ENCODE measurements at regions of chr12 and their contacts with region 1.

Region 1: DNA sequence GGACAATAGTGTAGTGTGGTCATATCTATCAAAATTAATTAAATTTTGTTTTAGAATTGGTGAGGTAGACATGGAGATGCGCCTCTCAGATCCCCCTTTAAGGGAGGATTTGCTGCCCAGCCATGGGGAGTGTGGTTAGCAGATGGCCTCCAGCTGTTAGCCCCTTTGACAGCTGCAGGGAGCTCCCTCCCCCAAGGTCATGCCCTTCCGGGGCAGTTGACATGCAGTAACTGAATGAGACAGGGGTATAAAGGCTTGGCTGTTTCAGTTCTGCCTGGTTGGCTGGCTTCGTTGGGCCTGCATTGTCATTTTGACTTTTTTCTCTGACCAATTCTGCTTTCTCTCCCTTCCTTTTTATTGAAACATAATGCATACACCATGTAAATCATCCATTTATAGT is 291.5 kb upstream of the SRRM4 start:
- DNase-seq: no peak
- H3K4me3 ChIP-seq: no peak overlapping the region
- H3K27ac ChIP-seq: no peak overlapping the region
- H3K4me1 ChIP-seq: no peaks in the 10 kb centered on the region
- H3K27me3 ChIP-seq: no peaks in the 10 kb centered on the region
- CTCF ChIP-seq: no peak

Region 2: GRCh38 chr12:117921929-117922777 is 767.6 kb before region 1 on chr12:
- CTCF ChIA-PET with region 1: no interaction called
- dilution Hi-C with region 1: no loop called
- in situ Hi-C with region 1: no loop called
- intact Hi-C with region 1: loop called (anchors 10 kb)
- DNase-seq: no peak
- H3K4me3 ChIP-seq: no peak overlapping the region
- H3K27ac ChIP-seq: no peak overlapping the region
- H3K4me1 ChIP-seq: no peaks in the 10 kb centered on the region
- H3K27me3 ChIP-seq: no peaks in the 10 kb centered on the region
- CTCF ChIP-seq: no peak

Region 3: DNA sequence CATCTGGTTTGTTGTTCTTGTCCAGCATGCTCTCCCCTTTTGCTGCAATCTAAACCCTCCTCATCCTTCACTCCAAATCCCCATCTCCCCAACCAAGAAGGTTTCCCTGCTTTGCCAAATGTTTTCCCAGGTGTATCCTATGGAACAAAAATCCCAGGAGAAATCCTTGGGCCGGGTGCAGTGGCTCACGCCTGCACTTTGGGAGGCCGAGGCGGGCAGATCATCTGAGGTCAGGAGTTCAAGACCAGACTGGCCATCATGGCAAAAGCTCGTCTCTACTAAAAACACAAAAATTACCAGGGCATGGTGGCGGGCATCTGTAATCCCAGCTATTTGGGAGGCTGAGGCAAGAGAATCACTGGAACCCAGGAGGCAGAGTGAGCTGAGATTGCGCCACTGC is 726.0 kb before region 1 on chr12:
- CTCF ChIA-PET with region 1: no interaction called
- dilution Hi-C with region 1: no loop called
- in situ Hi-C with region 1: no loop called
- intact Hi-C with region 1: no loop called
- DNase-seq: no peak
- H3K4me3 ChIP-seq: no peak overlapping the region
- H3K27ac ChIP-seq: no peak overlapping the region
- H3K4me1 ChIP-seq: no peaks in the 10 kb centered on the region
- H3K27me3 ChIP-seq: peaks cover 6% of the 10 kb centered on the region
- CTCF ChIP-seq: no peak

Region 4: GRCh38 chr12:118714051-118714460 is 24.3 kb after region 1 on chr12:
- CTCF ChIA-PET with region 1: no interaction called
- dilution Hi-C with region 1: no loop called
- in situ Hi-C with region 1: no loop called
- intact Hi-C with region 1: no loop called
- DNase-seq: no peak
- H3K4me3 ChIP-seq: no peak overlapping the region
- H3K27ac ChIP-seq: no peak overlapping the region
- H3K4me1 ChIP-seq: no peaks in the 10 kb centered on the region
- H3K27me3 ChIP-seq: no peaks in the 10 kb centered on the region
- CTCF ChIP-seq: peak in 1 of 2 donors; percentile 15

Region 5: DNA sequence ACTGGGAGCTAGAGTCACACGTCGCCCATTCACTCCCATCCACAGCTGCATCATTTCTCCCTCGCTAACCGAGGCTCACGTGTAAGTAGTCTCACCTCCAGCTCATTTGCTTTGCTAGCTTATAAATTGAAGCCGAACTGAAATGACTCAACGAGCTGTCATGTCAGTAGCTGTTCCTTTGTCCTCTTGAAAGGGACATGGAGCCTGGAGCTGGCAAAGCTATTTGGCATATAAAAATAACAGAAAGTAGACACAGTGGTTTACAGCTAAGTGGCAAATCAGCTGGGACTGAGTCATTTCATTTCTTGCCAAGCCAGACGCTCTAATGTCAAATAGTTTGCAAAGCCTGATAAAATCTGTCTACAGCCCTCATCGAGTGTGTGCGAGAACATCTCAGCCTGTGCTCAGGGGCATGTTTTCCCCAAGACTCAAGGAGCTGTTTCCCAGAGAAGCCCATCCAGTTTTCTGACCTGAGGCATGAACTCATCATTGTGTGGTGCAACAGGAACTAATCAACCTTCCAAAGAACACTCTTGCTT is 789.4 kb after region 1 on chr12:
- CTCF ChIA-PET with region 1: no interaction called
- dilution Hi-C with region 1: no loop called
- in situ Hi-C with region 1: no loop called
- intact Hi-C with region 1: no loop called
- DNase-seq: no peak
- H3K4me3 ChIP-seq: no peak overlapping the region
- H3K27ac ChIP-seq: no peak overlapping the region
- H3K4me1 ChIP-seq: no peaks in the 10 kb centered on the region
- H3K27me3 ChIP-seq: no peaks in the 10 kb centered on the region
- CTCF ChIP-seq: no peak

Measured in mammary epithelial cell (primary cell).